Heart right ventricle (tissue), 16 donors: ENCODE measurements at regions of chr18 and their contacts with region 1.

Region 1: DNA sequence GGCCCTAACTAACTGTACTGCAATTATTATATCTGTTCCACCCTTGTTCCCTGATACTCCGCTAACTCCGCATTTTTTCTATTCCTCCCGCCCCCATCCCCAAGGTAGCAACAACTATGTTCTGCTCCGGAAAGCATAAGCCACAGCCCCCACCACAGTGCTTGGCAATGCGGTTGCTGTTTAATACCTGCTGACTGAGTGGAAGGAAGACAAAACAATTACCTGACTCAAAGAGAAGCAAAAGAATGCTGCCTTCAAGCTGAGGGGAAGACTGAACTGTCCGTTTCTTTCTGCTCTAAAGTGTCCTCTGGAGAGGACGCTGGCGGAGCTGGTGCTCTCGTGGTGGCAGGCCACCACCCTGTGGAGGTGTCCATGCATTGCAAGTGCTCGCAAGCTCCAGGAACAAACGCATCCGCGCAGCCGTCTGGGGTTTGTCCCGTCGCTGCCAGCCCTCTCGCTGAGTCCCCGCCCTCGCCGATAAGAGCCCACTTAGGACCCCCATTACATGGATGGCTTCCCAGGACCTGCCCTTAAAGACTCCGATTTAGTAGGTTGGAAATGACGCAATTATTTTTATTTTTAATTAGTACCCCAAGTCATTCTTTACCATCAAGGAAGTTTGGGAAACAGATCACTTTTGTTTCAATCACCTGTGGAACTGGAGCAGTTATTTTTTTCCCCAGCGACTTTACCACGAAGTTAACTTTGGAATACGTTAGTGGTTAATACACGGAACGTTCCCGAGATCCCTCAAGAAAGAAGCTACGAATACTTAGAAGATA is 1.6 kb upstream of the MYL12A start:
- DNase-seq: peak; percentile 88 to 90
- ATAC-seq: peak; percentile 60 to 85 (median 76)
- H3K4me3 ChIP-seq: peak overlapping the region; percentile 27 to 95 (median 90)
- H3K27ac ChIP-seq: peak overlapping the region; percentile 98 to 100 (median 99)
- H3K4me1 ChIP-seq: peaks cover 0 to 54% (median 37%) of the 10 kb centered on the region in 9 donors
- H3K27me3 ChIP-seq: no peaks in the 10 kb centered on the region
- CTCF ChIP-seq: peak; percentile 90 to 98 (median 96)

Region 2: GRCh38 chr18:3012964-3013804 is 232.9 kb before region 1 on chr18 and contains the start of gene LPIN2:
- intact Hi-C with region 1: loop called in 3 of 10 experiments (anchors 1 to 10 kb)
- DNase-seq: peak; percentile 99 to 100
- ATAC-seq: peak; percentile 91 to 94 (median 92)
- H3K4me3 ChIP-seq: peak within 1 kb of the TSS; percentile 50 to 92 (median 88)
- H3K27ac ChIP-seq: peak within 1 kb of the TSS; percentile 57 to 99 (median 95)
- H3K4me1 ChIP-seq: peaks cover 3 to 84% (median 39%) of the 10 kb centered on the region in 9 donors
- H3K27me3 ChIP-seq: no peaks in the 10 kb centered on the region
- CTCF ChIP-seq: no peak
- total RNA-seq, gene LPIN2: 6.8 to 15.9 (median 8.2) TPM

Region 3: GRCh38 chr18:3151399-3152264 is 94.4 kb before region 1 on chr18:
- intact Hi-C with region 1: loop called in 7 of 10 experiments (anchors 2 to 10 kb)
- DNase-seq: no peak
- ATAC-seq: no peak
- H3K4me3 ChIP-seq: no peak overlapping the region
- H3K27ac ChIP-seq: peak overlapping the region in 1 of 10 donors; percentile 26
- H3K4me1 ChIP-seq: peaks cover 0 to 52% (median 30%) of the 10 kb centered on the region in 9 donors
- H3K27me3 ChIP-seq: no peaks in the 10 kb centered on the region
- CTCF ChIP-seq: peak; percentile 54 to 83 (median 76)

Region 4: DNA sequence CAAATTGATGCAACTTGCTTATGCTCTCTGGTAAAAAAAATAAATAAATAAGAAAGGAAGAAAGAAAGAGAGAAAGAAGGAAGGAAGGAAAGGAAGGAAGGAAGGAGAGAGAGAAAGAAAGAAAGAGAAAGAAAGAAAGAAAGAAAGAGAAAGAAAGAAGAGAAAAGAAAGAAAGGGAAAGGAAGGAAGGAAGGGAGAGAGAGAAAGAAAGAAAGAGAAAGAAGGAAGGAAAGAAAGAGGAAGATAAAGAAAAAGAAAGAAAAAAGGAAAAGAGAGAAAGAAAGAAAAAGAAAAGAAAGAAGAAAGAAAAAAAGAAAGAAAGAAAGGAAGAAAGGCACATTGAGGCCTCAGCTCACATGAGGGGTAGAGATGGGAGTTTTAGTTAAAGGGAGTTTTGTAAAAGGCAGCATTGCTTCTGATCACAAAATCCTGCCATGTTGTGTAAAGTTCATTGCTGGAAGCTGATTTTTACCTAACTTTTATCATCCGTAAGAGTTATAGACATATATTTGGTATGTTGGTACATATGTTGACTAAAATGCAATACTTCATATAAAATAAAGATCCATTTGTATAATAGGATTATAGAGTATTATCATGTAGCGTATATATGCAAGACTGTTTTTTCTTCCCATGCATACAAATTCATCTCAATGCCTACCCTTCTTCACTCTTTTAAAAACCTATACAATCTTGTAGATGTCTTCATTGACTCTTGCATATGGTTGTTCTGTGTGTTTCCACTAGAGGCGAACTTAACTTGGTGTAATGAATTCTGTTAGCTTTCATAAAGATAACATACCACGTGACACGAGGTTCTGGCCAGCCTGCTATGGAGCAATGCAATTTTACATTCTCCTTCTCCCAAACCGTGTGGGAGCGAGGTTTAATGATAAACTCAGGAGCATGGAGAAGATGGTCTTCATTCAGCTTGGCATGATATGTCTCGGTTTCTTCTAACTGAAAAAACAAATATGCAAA is 59.1 kb before region 1 on chr18:
- intact Hi-C with region 1: loop called in 5 of 10 experiments (anchors 5 to 10 kb)
- DNase-seq: no peak
- ATAC-seq: peak in 4 of 8 donors; percentile 17 to 59 (median 46)
- H3K4me3 ChIP-seq: no peak overlapping the region
- H3K27ac ChIP-seq: no peak overlapping the region
- H3K4me1 ChIP-seq: peaks cover 0 to 64% (median 16%) of the 10 kb centered on the region in 9 donors
- H3K27me3 ChIP-seq: no peaks in the 10 kb centered on the region
- CTCF ChIP-seq: peak in 6 of 9 donors; percentile 13 to 42 (median 30)

Region 5: DNA sequence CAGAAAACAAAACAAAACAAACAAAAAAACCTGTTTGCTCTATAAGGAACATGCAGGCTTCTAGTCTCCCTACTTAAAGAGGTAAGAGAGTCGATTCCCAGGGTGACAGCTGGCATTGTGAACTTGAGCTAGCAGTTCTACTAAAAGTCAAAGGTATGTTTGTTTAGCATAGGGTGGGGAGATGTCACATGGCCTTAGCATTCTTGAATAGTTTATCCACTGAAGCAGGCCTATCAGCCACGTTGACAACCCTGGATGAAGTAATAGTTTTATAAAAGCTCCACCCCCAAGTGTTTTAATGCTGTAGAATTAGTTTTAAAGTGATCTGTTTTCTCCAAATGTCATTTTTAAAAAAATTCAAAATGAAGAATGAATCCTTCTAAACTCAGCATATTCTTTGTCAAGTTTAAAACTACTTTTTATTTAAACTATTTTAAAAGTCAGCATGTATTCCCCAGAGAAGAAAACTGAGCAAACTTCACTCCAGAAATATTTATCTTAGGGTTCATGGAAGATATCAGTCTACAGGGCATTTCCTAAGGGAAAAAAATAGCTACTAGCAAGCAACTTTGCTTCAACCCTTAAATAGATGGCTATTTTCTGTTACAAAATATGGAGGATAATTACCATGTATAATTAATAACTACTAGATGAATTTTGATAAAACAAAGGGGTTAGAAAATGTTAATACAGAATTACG is 27.9 kb before region 1 on chr18:
- intact Hi-C with region 1: loop called in 2 of 10 experiments (anchors 2 kb)
- DNase-seq: no peak
- ATAC-seq: peak in 7 of 8 donors; percentile 31 to 70 (median 54)
- H3K4me3 ChIP-seq: peak overlapping the region in 9 of 10 donors; percentile 44 to 65 (median 58)
- H3K27ac ChIP-seq: peak overlapping the region; percentile 80 to 96 (median 95)
- H3K4me1 ChIP-seq: peaks cover 0 to 35% (median 16%) of the 10 kb centered on the region in 9 donors
- H3K27me3 ChIP-seq: no peaks in the 10 kb centered on the region
- CTCF ChIP-seq: no peak

Region 6: DNA sequence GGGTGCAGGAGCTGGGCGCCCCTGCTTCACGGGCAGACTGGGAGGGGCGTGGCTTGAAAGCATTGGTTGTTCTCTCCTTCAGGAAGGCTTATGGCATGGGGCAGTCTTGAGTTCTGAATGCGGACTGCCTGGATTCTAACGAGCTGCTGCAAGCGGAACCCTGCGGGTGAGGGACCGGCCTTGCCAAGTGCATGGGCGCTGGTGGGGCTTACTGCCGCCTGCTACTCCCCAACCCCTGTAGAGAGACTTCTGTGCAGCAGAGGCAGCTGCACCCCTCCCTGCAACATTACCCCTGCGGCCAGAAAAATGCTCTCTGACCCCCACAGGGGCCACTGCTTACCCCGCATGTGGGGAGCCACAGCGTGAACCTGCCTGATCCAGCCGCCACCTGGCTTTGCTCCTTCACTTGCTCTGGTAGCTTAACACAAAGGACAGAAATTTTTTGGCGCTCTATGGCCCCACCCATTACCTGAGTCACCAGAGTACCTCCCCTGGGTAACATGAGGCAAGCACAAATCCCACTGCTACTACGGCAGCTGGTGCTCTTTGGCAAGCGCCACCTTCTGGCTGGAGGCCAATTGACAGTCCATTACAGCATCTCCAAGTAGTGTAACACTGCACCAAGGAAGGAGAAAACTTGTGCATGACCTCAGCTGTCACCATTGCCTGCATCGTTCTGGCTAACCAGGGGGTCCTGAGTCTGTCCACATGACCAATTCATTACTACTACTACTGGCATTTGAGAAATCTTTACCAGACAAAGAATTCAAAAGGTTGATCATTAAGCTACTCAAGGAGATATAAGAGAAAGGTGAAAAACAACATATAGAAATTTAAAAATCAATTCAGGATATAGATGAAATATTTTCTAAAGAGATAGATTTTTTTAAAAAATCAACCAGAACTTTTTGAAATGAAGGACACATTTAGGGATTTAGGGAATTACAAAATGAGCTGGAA is 51.3 kb after region 1 on chr18:
- intact Hi-C with region 1: no loop called
- DNase-seq: peak; percentile 76 to 79
- ATAC-seq: peak; percentile 67 to 96 (median 92)
- H3K4me3 ChIP-seq: peak overlapping the region; percentile 11 to 71 (median 60)
- H3K27ac ChIP-seq: peak overlapping the region in 3 of 10 donors; percentile 21 to 73 (median 30)
- H3K4me1 ChIP-seq: peaks cover 0 to 13% (median 0%) of the 10 kb centered on the region in 9 donors
- H3K27me3 ChIP-seq: peaks cover 0 to 24% (median 5%) of the 10 kb centered on the region in 7 donors
- CTCF ChIP-seq: peak in 7 of 9 donors; percentile 9 to 60 (median 47)

Region 7: DNA sequence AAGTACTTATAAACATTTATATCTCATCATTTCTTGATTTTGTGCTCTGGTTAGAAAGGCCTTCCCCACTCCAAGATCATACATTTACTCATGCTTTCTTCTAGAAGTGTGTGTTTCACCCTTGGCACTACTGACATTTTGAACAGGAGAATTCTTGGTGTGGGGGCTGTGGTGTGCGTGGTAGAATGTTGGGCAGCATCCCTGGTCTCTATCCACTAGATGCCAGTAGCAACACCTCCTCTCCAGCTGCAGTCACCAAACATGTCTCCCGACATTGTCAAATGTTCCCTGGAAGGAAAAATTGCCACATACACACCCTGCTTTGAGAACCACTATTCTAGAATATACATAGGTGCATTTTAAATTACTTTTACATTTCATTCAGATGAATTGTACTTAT is 195.2 kb after region 1 on chr18:
- intact Hi-C with region 1: no loop called
- DNase-seq: peak in 1 of 2 donors; percentile 37
- ATAC-seq: peak in 5 of 8 donors; percentile 61 to 94 (median 82)
- H3K4me3 ChIP-seq: no peak overlapping the region
- H3K27ac ChIP-seq: no peak overlapping the region
- H3K4me1 ChIP-seq: peaks cover 0 to 8% (median 0%) of the 10 kb centered on the region in 9 donors
- H3K27me3 ChIP-seq: no peaks in the 10 kb centered on the region
- CTCF ChIP-seq: peak in 8 of 9 donors; percentile 13 to 62 (median 42)